Activated B cell treated with CpG ODN at 0.5 μM for 24 hours (primary cell): ENCODE measurements at regions of chr1 and their contacts with region 1.

Region 1: DNA sequence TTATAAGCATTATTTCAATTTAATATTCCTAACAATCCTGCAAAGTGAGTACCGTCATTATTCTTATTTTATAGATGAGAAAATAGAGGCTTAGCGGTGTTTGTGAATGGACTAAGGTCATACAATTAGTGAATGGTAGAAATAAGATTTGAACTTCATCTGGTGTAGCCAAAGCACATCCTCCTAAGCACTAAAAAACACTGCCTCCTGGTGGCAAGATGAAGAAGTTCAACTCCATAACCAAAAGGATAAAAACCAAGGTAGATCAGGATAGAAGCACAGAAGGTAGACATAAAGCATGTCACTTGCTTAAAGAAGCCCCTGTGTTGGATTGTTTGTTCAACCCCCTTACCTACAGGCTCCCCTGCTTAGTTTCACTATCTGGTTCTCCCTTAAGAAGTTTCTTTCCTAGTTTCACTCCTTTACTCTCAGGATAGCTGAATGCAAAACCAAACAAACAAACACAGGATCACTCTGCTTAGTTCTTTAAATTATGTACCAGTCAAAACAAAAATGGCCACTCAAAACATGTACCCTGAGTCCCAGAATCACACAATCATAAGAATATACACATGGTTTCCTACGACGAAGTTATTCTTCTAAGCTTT is 12.7 kb upstream of the AIM2 start:
- DNase-seq: no peak
- ATAC-seq: peak; percentile 33
- H3K4me3 Mint-ChIP-seq: no peak overlapping the region
- H3K27ac Mint-ChIP-seq: peak overlapping the region; percentile 44
- H3K4me1 Mint-ChIP-seq: peaks cover 23% of the 10 kb centered on the region
- H3K27me3 Mint-ChIP-seq: no peaks in the 10 kb centered on the region
- CTCF ChIP-seq: no peak

Region 2: DNA sequence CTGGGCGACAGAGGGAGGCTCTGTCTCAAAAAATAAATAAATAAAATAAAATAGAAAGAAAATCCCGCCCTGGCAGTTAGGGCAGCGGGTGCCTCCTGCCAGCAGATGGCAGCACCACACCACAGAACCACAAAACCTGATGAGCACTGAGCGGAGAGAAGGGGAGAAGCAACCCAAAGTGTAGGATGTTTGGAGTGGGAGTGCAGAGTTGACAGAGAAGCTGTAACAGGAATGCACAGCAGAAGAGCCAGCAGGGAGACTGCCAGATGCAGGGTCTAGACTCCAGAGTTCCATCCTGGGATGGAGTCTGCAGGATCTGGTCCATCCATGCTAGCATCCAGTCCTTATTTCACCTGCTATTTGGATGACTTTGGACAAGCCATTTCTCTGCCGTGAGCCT is 1125.6 kb before region 1 on chr1:
- CTCF ChIA-PET with region 1: no interaction called
- POLR2A ChIA-PET with region 1: no interaction called
- intact Hi-C with region 1: loop called (anchors 10 kb)
- DNase-seq: peak; percentile 52
- ATAC-seq: peak; percentile 57
- H3K4me3 Mint-ChIP-seq: no peak overlapping the region
- H3K27ac Mint-ChIP-seq: no peak overlapping the region
- H3K4me1 Mint-ChIP-seq: no peaks in the 10 kb centered on the region
- H3K27me3 Mint-ChIP-seq: peaks cover 22% of the 10 kb centered on the region
- CTCF ChIP-seq: peak; percentile 80

Region 3: DNA sequence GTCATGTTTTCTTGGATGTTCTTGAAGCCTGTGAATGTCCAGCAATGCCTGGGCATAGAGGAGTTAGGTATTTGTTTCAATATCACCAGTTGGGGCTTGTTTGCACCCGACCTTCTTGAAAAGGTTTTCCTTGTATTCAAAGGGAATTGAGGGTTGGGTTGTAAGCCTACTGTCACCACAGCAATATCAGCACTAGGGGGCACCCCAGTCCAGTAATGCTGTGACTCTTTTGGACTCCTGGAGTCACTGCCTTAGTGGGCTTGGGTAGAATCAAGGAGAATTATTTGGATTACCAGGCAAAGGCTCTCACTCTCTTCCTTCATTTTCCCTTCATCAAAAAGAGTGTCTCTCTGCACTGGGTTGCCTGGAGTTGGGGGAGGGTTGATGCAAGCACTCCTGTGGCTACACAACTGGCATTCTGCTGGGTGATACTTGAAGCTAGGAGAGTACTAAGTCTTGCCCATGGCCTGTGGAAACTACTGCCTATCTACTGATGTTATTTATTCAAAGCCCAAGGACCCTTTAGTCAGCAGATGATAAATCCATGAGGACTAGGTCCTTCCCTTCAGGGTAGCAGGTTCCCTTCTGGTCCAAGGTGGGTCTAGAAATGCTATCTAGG is 582.8 kb before region 1 on chr1:
- CTCF ChIA-PET with region 1: interaction called, 6 read pairs
- POLR2A ChIA-PET with region 1: no interaction called
- intact Hi-C with region 1: loop called (anchors 1 kb)
- DNase-seq: no peak
- ATAC-seq: peak; percentile 56
- H3K4me3 Mint-ChIP-seq: no peak overlapping the region
- H3K27ac Mint-ChIP-seq: no peak overlapping the region
- H3K4me1 Mint-ChIP-seq: no peaks in the 10 kb centered on the region
- H3K27me3 Mint-ChIP-seq: peaks cover 18% of the 10 kb centered on the region
- CTCF ChIP-seq: no peak

Region 4: GRCh38 chr1:159077120-159077961 is 11.9 kb before region 1 on chr1:
- CTCF ChIA-PET with region 1: interaction called, 17 read pairs
- POLR2A ChIA-PET with region 1: interaction called, 38 read pairs
- intact Hi-C with region 1: loop called (anchors 1 kb)
- DNase-seq: peak; percentile 71
- ATAC-seq: peak; percentile 73
- H3K4me3 Mint-ChIP-seq: peak overlapping the region; percentile 89
- H3K27ac Mint-ChIP-seq: peak overlapping the region; percentile 94
- H3K4me1 Mint-ChIP-seq: peaks cover 40% of the 10 kb centered on the region
- H3K27me3 Mint-ChIP-seq: no peaks in the 10 kb centered on the region
- CTCF ChIP-seq: no peak